Common myeloid progenitor, CD34-positive (primary cell): ENCODE measurements at regions of chr15 and their contacts with region 1.

Region 1: GRCh38 chr15:80173022-80173759 is 20.4 kb downstream of the FAH start:
- DNase-seq: peak; percentile 64 to 79 (median 77)
- H3K4me3 ChIP-seq: no peak overlapping the region
- H3K27ac ChIP-seq: no peak overlapping the region
- H3K4me1 ChIP-seq: peaks cover 0 to 2% (median 0%) of the 10 kb centered on the region in 4 experiments
- H3K27me3 ChIP-seq: no peaks in the 10 kb centered on the region

Region 2: GRCh38 chr15:80059786-80060355 is 113.3 kb before region 1 on chr15:
- CTCF ChIA-PET with region 1: interaction called, 11 read pairs
- POLR2A ChIA-PET with region 1: no interaction called
- DNase-seq: peak; percentile 66 to 88 (median 83)
- H3K4me3 ChIP-seq: peak overlapping the region; percentile 80 to 95 (median 85)
- H3K27ac ChIP-seq: peak overlapping the region; percentile 93 to 94
- H3K4me1 ChIP-seq: peaks cover 11 to 33% (median 20%) of the 10 kb centered on the region in 4 experiments
- H3K27me3 ChIP-seq: no peaks in the 10 kb centered on the region

Region 3: DNA sequence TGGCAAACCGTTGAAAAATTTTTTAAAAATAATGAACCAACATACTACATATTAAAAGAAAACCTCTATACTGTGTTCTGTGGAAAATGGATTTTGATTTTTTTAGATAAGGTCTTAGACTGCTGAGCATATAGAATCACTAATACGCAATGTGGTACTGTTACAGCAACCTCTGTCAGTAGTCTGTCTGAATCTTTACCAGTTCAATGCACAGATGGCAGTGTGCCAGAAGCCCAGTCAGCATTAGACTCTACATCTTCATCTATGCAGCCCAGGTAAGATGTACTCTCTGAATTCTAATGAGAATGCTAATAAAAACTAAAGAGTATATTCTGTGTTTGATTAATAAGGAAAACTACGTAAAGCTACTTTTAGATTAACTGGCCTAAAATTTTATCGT is 51.6 kb before region 1 on chr15:
- CTCF ChIA-PET with region 1: no interaction called
- POLR2A ChIA-PET with region 1: no interaction called
- DNase-seq: no peak
- H3K4me3 ChIP-seq: no peak overlapping the region
- H3K27ac ChIP-seq: no peak overlapping the region
- H3K4me1 ChIP-seq: no peaks in the 10 kb centered on the region
- H3K27me3 ChIP-seq: no peaks in the 10 kb centered on the region

Region 4: DNA sequence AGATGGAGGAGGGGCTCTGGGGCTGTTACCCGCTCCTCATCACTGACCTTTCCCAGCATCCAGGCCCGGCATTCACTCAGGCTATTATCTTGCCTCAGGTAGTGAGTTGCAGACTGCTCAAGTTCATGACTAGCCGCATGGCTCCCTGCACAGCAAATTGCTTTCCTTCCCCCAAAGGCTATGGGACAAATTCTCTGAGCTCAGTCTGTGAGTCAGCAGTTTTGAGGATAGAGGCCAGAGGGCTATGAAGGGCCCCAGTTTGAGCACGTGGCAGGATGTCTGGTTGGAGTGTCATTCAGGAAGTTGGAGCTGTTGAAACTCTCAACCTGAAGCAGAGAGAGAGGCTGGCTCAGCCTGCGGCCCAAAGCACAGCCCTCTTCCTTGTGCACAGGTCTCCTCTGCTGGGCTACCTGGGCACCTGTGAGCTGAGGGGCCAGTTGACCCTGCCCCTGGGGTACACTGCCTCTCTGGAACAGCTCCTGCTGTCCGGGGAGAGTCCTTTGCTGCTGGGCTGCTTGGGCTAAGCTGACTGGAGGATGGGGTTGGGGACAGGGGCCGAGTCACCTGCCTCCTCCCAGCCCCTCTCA is 12.5 kb before region 1 on chr15:
- CTCF ChIA-PET with region 1: interaction called, 19 read pairs
- POLR2A ChIA-PET with region 1: interaction called, 4 read pairs
- DNase-seq: peak; percentile 89 to 98 (median 97)
- H3K4me3 ChIP-seq: peak overlapping the region in 3 of 7 experiments; percentile 10 to 33 (median 20)
- H3K27ac ChIP-seq: peak overlapping the region; percentile 47 to 83
- H3K4me1 ChIP-seq: peaks cover 4 to 46% (median 32%) of the 10 kb centered on the region in 4 experiments
- H3K27me3 ChIP-seq: no peaks in the 10 kb centered on the region